ENCODE measurements at regions of chr7 and their contacts with region 1.

Region 1: DNA sequence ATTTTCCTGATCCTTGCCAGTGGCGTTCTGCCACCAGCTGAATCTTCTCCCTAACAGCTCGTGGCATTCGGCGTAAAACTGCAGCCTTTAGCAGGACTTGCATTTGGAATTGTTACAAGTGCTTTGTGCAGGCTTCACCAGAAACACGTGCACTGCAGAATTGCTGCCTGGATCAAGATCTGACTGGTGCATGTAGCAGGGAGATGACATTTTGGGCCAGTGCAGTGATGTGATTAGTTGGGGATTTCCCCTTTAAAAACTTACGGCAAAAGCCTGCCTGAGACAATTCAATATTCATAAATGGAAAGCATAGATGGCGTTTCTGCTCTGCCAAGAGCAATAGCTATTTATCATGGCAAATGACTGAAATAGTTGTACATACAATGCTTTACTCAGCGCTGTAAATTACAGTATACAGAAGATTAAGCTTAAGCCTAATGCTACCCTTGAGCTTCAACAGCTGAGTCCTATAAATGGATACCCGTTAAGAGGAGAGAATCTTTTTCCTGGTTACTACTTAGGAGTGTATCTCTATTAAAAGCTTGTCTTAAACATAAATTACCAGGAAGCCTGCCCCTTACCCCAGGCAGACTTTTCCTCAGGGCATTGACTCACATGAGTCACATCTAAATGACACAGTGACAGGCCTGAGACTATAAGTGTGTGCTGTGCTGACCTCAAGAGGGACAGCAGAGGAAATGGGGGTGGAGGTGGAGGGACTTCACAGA is 106.3 kb downstream of the ATXN7L1 start:
- DNase-seq: no peak
- ATAC-seq: peak; percentile 70
- H3K4me3 ChIP-seq: no peak overlapping the region
- H3K27ac ChIP-seq: no peak overlapping the region
- H3K4me1 ChIP-seq: peaks cover 22% of the 10 kb centered on the region
- H3K27me3 ChIP-seq: peaks cover 0 to 8% of the 10 kb centered on the region in 2 experiments; a peak in 2 of 4 replicates
- CTCF ChIP-seq: peak in 1 of 3 experiments; percentile 4; a peak in 1 of 6 replicates
- EP300 ChIP-seq: no peak
- POLR2A ChIP-seq: no peak
- RAD21 ChIP-seq: no peak

Region 2: DNA sequence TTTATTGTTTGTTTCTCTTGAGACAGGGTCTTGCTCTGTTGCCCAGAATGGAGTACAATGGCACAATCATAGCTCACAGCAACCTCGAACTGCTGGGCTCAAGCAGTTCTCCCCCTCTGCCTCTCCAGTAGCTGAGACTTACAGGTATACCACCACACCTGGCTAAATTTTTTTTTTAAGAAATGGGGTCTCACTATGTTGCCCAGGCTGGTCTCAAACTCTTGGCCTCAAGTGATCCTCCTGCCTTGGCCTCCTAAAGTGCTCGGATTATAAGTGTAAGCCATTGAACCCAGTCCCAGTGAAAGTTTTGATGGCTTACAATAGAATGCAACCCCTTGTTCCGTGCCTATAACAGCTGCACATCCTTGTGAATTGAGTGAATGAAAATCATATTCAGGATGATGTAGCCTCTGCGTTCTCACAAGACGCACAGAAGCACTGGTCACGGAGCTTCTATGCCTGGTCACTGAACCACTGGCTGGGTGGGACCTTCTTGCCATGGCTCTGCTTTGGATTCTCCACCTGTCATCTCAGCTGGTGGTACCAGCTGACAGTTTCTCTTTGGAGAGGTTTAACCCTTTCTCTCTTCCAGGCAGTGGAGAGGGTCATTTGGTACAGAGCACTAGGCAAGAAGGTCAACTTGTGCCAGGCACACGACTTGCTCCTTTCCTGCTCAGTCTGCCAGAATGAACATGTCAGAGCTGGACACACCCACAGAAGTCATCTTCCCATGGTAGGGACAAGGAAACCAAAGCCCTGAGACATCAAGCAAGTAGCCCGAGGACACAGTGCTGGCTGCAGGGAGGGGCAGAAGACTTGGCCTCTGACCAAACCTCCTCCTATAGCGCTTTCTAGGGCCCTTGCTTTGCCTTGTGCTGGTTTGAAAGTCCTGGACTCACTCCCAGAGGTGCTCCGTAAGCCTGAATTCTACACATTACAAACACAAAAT is 16.7 kb after region 1 on chr7:
- CTCF ChIA-PET with region 1: interaction called, 5 read pairs
- POLR2A ChIA-PET with region 1: interaction called, 6 read pairs
- RAD21 ChIA-PET with region 1: interaction called, 3 read pairs
- SMC1A ChIA-PET with region 1: interaction called, 14 read pairs
- in situ Hi-C with region 1: no loop called
- intact Hi-C with region 1: no loop called
- DNase-seq: no peak
- ATAC-seq: no peak
- H3K4me3 ChIP-seq: no peak overlapping the region
- H3K27ac ChIP-seq: no peak overlapping the region
- H3K4me1 ChIP-seq: no peaks in the 10 kb centered on the region
- H3K27me3 ChIP-seq: peaks cover 2% of the 10 kb centered on the region in 2 experiments; a peak in 2 of 4 replicates
- CTCF ChIP-seq: no peak
- EP300 ChIP-seq: no peak
- POLR2A ChIP-seq: no peak
- RAD21 ChIP-seq: no peak

Region 3: DNA sequence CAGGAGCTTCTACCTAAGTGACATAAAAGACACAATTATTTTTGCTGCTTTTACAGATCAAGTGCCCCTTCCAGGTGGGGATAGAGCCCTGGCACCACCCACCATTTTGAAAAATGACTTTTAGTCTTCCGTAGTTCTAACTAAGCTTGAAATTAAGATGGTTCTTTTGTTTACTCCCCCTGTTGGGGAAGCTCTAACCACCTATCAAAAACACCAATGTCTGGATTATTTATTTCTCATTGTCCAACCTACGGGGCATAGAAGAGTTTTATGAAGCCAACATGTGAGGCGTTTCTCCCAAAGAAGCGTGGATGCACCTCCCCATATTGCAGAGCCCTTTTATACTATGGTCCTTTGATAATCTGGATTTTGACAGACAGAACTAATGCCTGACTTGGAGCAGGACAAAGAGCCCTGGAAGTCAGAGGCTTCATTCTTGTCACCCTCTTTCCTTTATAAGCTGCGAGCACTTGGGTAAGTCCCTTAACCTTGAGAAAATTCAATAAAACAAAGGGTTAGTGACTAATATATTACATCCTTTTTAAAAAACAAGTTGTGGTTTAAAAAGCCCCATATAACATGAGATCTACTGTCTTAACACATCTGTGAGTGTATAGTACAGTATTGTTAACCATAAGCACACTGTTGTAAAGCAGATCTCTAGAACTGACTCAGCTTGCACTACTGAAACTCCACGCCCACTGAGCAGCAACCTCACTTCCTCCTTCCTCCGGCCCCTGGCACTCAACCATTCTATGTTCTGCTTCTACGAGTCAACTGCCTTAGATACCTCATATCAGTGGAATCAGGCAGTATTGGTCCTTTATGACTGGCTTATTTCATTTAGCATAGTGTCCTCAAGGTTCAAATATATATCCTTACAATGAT is 38.9 kb after region 1 on chr7:
- CTCF ChIA-PET with region 1: interaction called, 45 read pairs
- POLR2A ChIA-PET with region 1: interaction called, 7 read pairs
- RAD21 ChIA-PET with region 1: interaction called, 99 read pairs
- SMC1A ChIA-PET with region 1: interaction called, 182 read pairs
- in situ Hi-C with region 1: no loop called
- intact Hi-C with region 1: loop called (anchors 2 kb)
- DNase-seq: peak; percentile 99
- ATAC-seq: peak; percentile 92
- H3K4me3 ChIP-seq: no peak overlapping the region
- H3K27ac ChIP-seq: peak overlapping the region; percentile 76
- H3K4me1 ChIP-seq: peaks cover 40% of the 10 kb centered on the region
- H3K27me3 ChIP-seq: no peaks in the 10 kb centered on the region
- CTCF ChIP-seq: no peak
- EP300 ChIP-seq: peak; percentile 99 to 100
- POLR2A ChIP-seq: no peak
- RAD21 ChIP-seq: no peak

Region 4: DNA sequence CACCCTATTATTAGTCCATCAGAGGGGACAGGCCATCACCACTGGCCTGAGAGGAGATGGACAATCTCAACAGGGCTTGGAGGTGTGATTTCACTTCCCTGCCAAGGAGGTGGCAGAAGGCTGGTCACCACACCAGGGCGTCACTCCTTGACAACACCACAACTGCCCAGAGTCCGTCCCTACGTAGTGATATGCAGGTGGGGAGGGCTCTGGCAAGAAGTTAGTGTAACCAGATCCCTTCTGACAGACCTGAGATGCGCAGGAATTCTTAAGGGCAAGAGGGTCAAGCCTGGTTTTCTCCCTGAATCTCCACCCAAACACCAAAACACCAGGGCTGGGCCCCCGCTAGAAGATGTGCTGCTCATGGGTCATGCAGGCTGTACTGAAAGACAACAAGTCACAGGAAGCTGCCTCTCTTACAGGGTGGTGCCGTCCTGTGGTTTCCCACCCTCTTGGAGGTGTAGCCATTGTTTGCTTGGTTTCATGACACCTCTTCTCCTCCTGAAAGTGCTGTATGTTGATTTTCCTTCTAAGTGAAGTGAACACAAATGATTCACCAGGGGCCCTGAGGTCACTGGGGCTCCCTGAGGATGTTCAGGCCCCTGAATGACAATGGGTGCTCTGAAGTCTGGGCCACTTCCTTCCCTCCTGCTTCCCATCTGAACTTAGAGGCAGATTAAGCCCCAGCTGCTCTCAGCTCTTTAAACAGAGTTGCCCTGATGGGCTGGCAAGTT is 79.2 kb after region 1 on chr7:
- CTCF ChIA-PET with region 1: interaction called, 3 read pairs
- POLR2A ChIA-PET with region 1: no interaction called
- RAD21 ChIA-PET with region 1: interaction called, 10 read pairs
- SMC1A ChIA-PET with region 1: interaction called, 5 read pairs
- in situ Hi-C with region 1: no loop called
- intact Hi-C with region 1: no loop called
- DNase-seq: peak; percentile 9
- ATAC-seq: peak; percentile 82
- H3K4me3 ChIP-seq: no peak overlapping the region
- H3K27ac ChIP-seq: no peak overlapping the region
- H3K4me1 ChIP-seq: peaks cover 4% of the 10 kb centered on the region; the same call in 1 of the 2 replicates
- H3K27me3 ChIP-seq: peaks cover 0 to 4% of the 10 kb centered on the region in 2 experiments; a peak in 1 of 4 replicates
- CTCF ChIP-seq: no peak
- EP300 ChIP-seq: peak; percentile 32 to 42; a peak in 2 of 4 replicates
- POLR2A ChIP-seq: no peak
- RAD21 ChIP-seq: no peak

Region 5: GRCh38 chr7:105876091-105876963 is 106.3 kb after region 1 on chr7 and contains the start of gene ATXN7L1:
- CTCF ChIA-PET with region 1: interaction called, 20 read pairs
- POLR2A ChIA-PET with region 1: no interaction called
- RAD21 ChIA-PET with region 1: interaction called, 11 read pairs
- SMC1A ChIA-PET with region 1: interaction called, 13 read pairs
- in situ Hi-C with region 1: no loop called
- intact Hi-C with region 1: no loop called
- DNase-seq: no peak
- ATAC-seq: peak; percentile 99
- H3K4me3 ChIP-seq: peak within 1 kb of the TSS; percentile 52
- H3K27ac ChIP-seq: no peak within 1 kb of the TSS
- H3K4me1 ChIP-seq: no peaks in the 10 kb centered on the region
- H3K27me3 ChIP-seq: peaks cover 9 to 13% of the 10 kb centered on the region in 2 experiments
- CTCF ChIP-seq: peak; percentile 6 to 57 (median 50); a peak in 3 of 6 replicates
- EP300 ChIP-seq: no peak
- POLR2A ChIP-seq: peak; percentile 25; the same call in 1 of the 2 replicates
- RAD21 ChIP-seq: 0 out of 2 replicates have a peak, but pooled peaks have one; percentile 10
- polyA plus RNA-seq, gene ATXN7L1: 0.40 to 0.72 TPM

Region 6: DNA sequence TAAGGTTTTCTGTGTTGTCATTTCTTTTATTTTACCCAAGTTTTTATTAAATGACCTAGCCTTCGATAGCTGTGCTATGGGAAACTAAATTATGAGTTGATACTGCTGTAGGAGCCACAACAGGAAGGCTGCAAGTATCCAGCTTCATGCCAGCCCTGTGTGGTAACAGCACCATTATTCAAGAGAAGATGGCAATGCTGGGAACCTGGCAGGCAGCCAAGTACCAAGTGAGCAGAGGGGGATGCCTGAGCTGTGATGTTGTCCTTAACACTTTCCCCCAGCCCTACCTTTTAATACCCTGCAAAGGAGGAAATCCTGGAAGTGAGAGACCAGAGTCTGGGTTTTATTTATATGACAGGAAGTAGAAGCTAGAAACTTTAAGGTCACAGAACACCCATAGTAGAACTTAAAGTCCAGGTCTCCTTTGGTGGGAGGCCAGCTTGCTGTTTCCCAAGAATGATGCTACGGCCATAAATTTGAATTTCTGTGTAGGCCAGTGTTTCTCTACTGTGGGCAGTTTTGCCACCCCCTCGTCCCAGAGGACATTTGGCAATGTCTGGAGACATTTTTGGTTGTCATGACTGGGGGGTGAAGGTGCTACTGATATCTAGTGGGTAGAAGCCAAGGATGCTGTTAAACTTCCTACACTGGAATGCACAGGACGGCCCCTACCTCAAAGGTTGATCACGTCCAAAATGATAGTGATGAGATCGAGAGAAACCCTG is 115.5 kb after region 1 on chr7:
- CTCF ChIA-PET with region 1: interaction called, 10 read pairs
- POLR2A ChIA-PET with region 1: no interaction called
- RAD21 ChIA-PET with region 1: interaction called, 6 read pairs
- SMC1A ChIA-PET with region 1: interaction called, 10 read pairs
- in situ Hi-C with region 1: no loop called
- intact Hi-C with region 1: no loop called
- DNase-seq: no peak
- ATAC-seq: no peak
- H3K4me3 ChIP-seq: no peak overlapping the region
- H3K27ac ChIP-seq: no peak overlapping the region
- H3K4me1 ChIP-seq: no peaks in the 10 kb centered on the region
- H3K27me3 ChIP-seq: peaks cover 0 to 3% of the 10 kb centered on the region in 2 experiments; a peak in 2 of 4 replicates
- CTCF ChIP-seq: no peak
- EP300 ChIP-seq: no peak
- POLR2A ChIP-seq: no peak
- RAD21 ChIP-seq: no peak

Region 7: GRCh38 chr7:106166655-106167342 is 396.7 kb after region 1 on chr7:
- CTCF ChIA-PET with region 1: interaction called, 10 read pairs
- POLR2A ChIA-PET with region 1: no interaction called
- RAD21 ChIA-PET with region 1: no interaction called
- SMC1A ChIA-PET with region 1: interaction called, 4 read pairs
- in situ Hi-C with region 1: no loop called
- intact Hi-C with region 1: no loop called
- DNase-seq: no peak
- ATAC-seq: peak; percentile 77
- H3K4me3 ChIP-seq: no peak overlapping the region
- H3K27ac ChIP-seq: no peak overlapping the region
- H3K4me1 ChIP-seq: no peaks in the 10 kb centered on the region
- H3K27me3 ChIP-seq: no peaks in the 10 kb centered on the region
- CTCF ChIP-seq: peak; percentile 68 to 77 (median 72); a peak in 5 of 6 replicates
- EP300 ChIP-seq: no peak
- POLR2A ChIP-seq: no peak
- RAD21 ChIP-seq: peak; percentile 85